Cardiac septum (tissue), 1 donor: ENCODE measurements at regions of chr15 and their contacts with region 1.

Region 1: GRCh38 chr15:92521624-92522008 is 127.9 kb downstream of the ST8SIA2 start:
- DNase-seq: no peak

Region 2: DNA sequence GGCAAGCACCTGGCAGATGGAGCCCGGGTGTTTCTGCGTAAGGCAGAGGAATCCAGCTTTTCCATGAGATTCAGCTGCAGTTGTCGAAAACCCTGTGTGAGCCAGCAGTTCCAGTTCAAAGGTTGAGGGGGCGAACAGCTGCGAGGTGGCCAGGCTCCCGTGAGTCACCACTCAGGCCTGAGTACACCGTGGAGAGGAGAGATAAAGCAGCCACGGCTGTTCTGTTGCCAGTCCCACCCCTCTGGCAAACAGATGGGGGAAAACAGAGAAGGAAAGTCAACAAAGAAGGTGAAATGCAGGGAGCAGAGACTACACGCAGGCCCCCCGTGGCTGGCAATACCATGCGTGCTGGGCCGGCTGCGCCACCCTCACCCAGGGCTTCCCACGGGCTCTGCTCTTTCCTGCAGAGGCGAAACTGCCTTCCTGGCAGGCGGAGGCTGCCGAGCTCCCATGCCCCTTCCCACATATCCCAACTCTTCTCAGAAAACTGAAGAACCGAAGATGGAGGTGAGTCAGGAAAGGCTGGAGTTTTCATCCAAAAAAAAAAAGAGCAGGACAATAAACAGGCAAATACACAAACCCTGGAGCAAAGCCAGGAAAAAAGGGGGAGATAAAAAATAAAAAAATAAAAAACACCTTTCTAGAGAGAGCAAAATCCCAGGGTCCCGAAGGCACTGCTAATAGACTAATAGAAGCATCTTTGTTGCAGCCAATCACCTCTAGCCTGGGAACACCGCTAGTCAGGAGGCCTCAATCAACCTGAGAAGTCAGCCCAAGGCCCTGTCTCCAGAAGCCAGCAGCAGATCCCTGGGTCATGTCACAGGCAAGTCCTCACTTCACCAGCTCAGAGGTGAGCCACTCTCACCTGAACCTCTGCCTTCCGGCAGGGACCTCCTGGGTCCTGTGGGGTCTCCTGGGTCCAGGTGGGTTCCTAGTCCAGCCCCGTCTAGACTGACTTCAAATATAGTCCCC is 96.2 kb after region 1 on chr15:
- intact Hi-C with region 1: loop called (anchors 5 kb)
- DNase-seq: peak; percentile 83

Region 3: DNA sequence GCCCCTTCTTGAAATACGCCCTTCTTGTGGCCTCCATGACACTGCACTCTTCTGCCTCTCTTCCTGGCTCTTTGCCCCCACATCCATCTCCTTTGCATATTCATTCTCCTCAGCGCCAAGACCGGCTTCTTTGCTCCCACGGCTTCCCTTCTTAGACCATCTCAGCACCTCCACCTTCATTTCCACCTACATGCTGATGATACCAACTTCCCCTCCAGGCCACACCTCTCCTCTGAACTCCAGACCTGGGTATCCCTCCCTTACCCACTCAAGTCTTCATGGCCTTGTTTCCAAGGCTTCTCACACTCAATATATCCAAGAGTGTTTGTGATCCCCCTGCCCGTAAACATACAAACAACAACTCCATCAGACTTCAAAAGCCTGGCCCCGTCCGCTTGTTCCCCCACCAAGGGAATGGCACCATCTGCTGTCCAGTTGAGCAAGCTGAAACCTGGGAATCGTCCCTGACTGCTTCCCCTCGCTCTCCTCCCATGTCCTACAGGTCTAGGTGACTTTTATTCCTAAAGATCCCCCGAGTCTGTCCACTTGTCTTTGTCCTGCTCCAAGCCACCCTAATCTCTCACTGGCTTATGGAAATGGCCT is 161.7 kb after region 1 on chr15:
- intact Hi-C with region 1: loop called (anchors 1 kb)
- DNase-seq: no peak

Region 4: DNA sequence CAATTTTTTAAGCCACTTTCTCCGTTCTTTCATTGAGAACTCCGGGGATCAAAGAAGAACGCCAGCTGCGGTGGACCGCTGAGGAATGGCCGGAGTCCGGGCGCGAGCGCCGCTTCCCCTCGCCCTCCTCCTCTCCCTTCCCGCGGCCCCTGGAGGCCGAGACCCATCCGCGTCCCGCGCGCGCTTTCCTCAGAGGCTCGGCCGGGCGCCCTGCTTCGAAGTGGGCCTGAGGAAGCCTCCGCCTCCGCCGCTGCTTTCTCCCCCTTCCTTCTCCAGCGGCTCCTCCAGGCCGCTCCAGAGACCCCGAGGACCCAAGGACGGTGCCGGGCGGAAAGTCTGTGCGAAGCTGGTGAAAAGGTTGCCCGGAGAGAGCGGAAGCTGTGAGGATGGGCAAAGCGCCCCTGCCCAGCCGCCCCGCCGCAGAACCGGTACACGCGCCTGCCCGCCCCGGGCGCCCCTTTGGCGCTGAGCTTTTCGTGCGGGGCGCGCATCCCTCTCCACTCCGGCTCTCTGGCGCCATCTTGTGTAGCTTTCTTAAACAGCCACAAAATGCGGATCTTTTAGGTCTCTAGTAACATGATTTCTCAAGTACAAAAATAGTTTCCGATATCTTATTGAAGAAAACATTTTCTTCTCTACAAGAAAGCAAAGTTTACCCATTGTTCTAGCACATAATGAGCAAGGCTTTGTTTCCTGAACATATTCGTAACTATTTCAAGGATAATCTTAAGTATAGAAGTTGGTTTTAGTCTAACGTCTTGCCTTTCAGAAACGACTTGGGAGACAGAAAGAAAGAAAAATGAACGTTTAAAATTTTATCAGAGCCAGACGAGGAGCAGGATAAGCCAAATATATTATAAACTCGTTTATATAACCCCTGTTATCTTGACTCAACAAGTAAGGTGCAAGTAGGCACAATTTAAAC is 193.1 kb after region 1 on chr15:
- intact Hi-C with region 1: loop called (anchors 1 kb)
- DNase-seq: peak; percentile 79